Activated B cell treated with CpG ODN at 0.5 μM for 24 hours (primary cell): ENCODE measurements at regions of chr16 and their contacts with region 1.

Region 1: GRCh38 chr16:75206749-75207451 is at the start of gene CTRB2:
- DNase-seq: no peak
- ATAC-seq: peak; percentile 28
- H3K4me3 Mint-ChIP-seq: no peak within 1 kb of the TSS
- H3K27ac Mint-ChIP-seq: no peak within 1 kb of the TSS
- H3K4me1 Mint-ChIP-seq: peaks cover 2% of the 10 kb centered on the region
- H3K27me3 Mint-ChIP-seq: peaks cover 22% of the 10 kb centered on the region
- CTCF ChIP-seq: no peak
- total RNA-seq, gene CTRB2: not detected in 2 replicates

Region 2: DNA sequence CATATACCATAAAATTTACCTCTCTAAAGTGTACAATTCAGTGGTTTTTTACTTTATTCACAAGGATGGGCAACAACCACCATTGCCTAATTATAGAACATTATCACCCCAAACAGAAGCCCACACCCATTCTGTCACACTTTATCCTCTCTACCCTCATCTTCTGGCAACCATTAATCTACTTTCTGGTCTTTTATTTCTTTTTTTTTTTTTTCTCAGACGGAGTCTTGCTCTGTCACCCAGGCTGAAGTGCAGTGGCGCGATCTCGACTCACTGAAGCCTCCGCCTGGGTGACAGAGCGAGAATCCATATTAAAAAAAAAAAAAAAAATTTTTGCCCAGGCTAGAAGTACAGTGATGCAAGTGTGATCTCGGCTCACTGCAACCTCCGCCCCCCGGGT is 694.9 kb before region 1 on chr16:
- CTCF ChIA-PET with region 1: no interaction called
- POLR2A ChIA-PET with region 1: no interaction called
- intact Hi-C with region 1: no loop called
- DNase-seq: no peak
- ATAC-seq: no peak
- H3K4me3 Mint-ChIP-seq: no peak overlapping the region
- H3K27ac Mint-ChIP-seq: no peak overlapping the region
- H3K4me1 Mint-ChIP-seq: peaks cover 25% of the 10 kb centered on the region
- H3K27me3 Mint-ChIP-seq: no peaks in the 10 kb centered on the region
- CTCF ChIP-seq: no peak

Region 3: GRCh38 chr16:75224306-75225091 is 17.6 kb after region 1 on chr16:
- CTCF ChIA-PET with region 1: interaction called, 3 read pairs
- POLR2A ChIA-PET with region 1: no interaction called
- intact Hi-C with region 1: loop called (anchors 2 kb)
- DNase-seq: no peak
- ATAC-seq: no peak
- H3K4me3 Mint-ChIP-seq: no peak overlapping the region
- H3K27ac Mint-ChIP-seq: no peak overlapping the region
- H3K4me1 Mint-ChIP-seq: peaks cover 5% of the 10 kb centered on the region
- H3K27me3 Mint-ChIP-seq: peaks cover 33% of the 10 kb centered on the region
- CTCF ChIP-seq: no peak